Left lung (tissue), 14 donors: ENCODE measurements at regions of chr1 and their contacts with region 1.

Region 1: GRCh38 chr1:65959896-65960567 is 167.3 kb downstream of the PDE4B start:
- DNase-seq: no peak
- ATAC-seq: peak; percentile 19
- H3K4me3 ChIP-seq: no peak overlapping the region
- H3K27ac ChIP-seq: no peak overlapping the region
- H3K4me1 ChIP-seq: no peaks in the 10 kb centered on the region
- H3K27me3 ChIP-seq: no peaks in the 10 kb centered on the region
- CTCF ChIP-seq: no peak

Region 2: DNA sequence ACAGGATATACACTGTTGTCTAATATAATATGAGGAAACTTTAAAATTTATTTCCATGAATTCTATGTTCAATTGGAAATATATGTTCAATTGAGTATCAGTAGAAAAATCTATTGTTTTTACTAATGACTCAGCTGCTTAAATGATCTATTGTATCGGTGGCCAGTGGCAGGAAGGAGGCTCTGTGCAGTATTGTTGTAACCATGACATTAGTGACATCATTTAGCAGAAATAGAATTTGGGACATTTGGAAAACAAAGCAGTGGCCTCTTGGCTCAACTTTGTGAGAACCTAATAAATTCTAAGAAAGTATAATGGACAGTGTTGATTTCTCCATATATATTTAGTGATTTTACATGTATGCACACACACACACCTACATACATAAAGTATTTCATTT is 90.1 kb after region 1 on chr1:
- intact Hi-C with region 1: no loop called
- DNase-seq: no peak
- ATAC-seq: no peak
- H3K4me3 ChIP-seq: no peak overlapping the region
- H3K27ac ChIP-seq: no peak overlapping the region
- H3K4me1 ChIP-seq: no peaks in the 10 kb centered on the region
- H3K27me3 ChIP-seq: no peaks in the 10 kb centered on the region
- CTCF ChIP-seq: no peak

Region 3: DNA sequence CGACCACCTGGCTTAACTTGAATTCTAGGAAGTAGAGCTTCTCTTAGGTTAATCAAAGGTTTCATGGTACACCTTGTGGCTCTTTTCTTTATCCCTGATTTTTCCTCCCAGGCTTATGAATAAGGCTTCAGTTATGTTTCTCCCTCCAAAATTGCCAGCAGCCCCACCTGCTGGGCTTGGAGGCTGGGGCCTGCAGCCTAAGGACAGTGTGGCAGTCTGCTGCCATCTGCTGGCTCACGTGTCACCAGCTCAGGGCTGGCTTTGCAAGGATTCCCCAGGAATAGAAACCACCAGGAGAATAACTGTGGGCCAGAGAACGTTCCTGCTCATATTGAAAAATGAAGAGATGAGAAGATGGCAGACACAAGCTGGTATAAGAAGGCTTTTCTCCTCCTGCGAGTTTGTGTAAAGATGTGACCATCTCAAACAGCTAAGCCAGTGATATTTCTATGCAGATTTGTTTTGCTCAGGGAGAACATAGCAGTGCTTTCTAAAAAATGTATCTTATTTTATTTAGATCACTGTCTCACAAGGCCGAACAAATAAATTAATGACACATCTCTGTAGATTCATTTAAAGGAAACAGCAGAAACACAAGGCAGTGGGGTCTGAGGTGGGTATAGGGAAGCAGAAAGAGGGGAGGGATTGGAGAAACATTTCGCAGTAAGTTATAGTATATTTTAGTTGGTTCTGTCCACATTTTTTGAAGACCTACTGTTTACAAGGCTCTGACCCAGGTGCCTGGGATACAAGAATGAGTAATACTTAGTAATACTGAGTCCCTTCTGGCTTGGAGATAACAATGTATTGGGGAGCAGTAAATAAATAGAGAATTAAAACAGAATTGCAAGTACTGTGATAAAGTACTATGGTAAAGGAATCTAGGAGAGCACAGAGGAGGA is 282.9 kb after region 1 on chr1:
- intact Hi-C with region 1: loop called in 1 of 2 experiments (anchors 5 kb)
- DNase-seq: peak; percentile 81 to 93 (median 86)
- ATAC-seq: peak; percentile 100
- H3K4me3 ChIP-seq: no peak overlapping the region
- H3K27ac ChIP-seq: no peak overlapping the region
- H3K4me1 ChIP-seq: peaks cover 0 to 5% of the 10 kb centered on the region in 2 donors
- H3K27me3 ChIP-seq: no peaks in the 10 kb centered on the region
- CTCF ChIP-seq: peak; percentile 88 to 97

Region 4: DNA sequence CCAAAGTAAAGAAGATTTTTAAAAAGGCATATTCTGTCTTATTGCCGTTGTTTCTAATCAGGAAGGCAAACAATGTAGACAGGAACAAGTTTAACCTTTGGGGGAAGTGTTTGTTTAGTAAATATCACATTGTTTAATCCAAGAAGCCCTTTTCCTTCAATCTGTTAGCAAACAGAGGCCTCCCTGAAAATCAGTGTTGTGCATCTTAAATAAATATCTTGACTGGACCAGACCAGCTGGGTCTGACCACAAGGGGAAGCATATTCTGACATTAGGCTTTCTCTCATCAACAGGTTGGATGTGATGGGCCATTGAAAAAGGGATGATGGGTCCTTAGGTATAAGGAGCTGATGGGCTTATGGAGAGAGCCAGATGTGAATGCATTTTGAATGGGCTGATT is 492.1 kb after region 1 on chr1:
- intact Hi-C with region 1: loop called in 1 of 2 experiments (anchors 10 kb)
- DNase-seq: no peak
- ATAC-seq: peak; percentile 17
- H3K4me3 ChIP-seq: no peak overlapping the region
- H3K27ac ChIP-seq: no peak overlapping the region
- H3K4me1 ChIP-seq: peaks cover 0 to 9% of the 10 kb centered on the region in 2 donors
- H3K27me3 ChIP-seq: no peaks in the 10 kb centered on the region
- CTCF ChIP-seq: no peak

Region 5: DNA sequence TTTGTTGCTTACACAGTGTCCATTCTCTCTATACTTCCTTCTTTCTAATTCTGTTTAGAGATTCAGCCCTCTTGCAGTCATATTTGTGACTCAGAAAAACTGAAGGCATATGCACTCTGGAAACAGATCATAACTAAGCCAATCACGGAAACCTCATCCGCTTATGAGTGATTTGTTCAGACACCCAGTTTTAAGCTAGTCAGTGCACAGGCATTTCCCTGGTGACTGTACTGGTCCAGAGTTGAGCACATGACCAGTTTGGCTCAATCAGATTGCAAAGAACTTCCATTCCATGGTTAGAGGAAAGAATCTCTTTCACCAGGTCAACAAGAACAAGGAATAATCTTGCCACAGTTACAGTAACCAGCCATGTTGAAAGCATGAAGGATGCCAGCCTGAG is 504.8 kb after region 1 on chr1:
- intact Hi-C with region 1: no loop called
- DNase-seq: no peak
- ATAC-seq: no peak
- H3K4me3 ChIP-seq: no peak overlapping the region
- H3K27ac ChIP-seq: no peak overlapping the region
- H3K4me1 ChIP-seq: no peaks in the 10 kb centered on the region
- H3K27me3 ChIP-seq: no peaks in the 10 kb centered on the region
- CTCF ChIP-seq: no peak